ENCODE measurements at regions of chr18 and their contacts with region 1.

Region 1: GRCh38 chr18:57523171-57523956 is 63.1 kb downstream of the FECH start:
- DNase-seq: no peak
- H3K4me3 ChIP-seq: no peak overlapping the region
- H3K27ac ChIP-seq: no peak overlapping the region
- H3K4me1 ChIP-seq: no peaks in the 10 kb centered on the region
- H3K27me3 ChIP-seq: no peaks in the 10 kb centered on the region
- CTCF ChIP-seq: no peak

Region 2: GRCh38 chr18:57446322-57446721 is 77.0 kb before region 1 on chr18:
- CTCF ChIA-PET with region 1: no interaction called
- dilution Hi-C with region 1: no loop called
- in situ Hi-C with region 1: no loop called
- intact Hi-C with region 1: no loop called
- DNase-seq: no peak
- H3K4me3 ChIP-seq: no peak overlapping the region
- H3K27ac ChIP-seq: no peak overlapping the region
- H3K4me1 ChIP-seq: no peaks in the 10 kb centered on the region
- H3K27me3 ChIP-seq: peaks cover 13% of the 10 kb centered on the region
- CTCF ChIP-seq: peak; percentile 35 to 69

Region 3: GRCh38 chr18:57466745-57467409 is 56.5 kb before region 1 on chr18:
- CTCF ChIA-PET with region 1: no interaction called
- dilution Hi-C with region 1: loop called (anchors 5 kb)
- in situ Hi-C with region 1: no loop called
- intact Hi-C with region 1: no loop called
- DNase-seq: no peak
- H3K4me3 ChIP-seq: no peak overlapping the region
- H3K27ac ChIP-seq: no peak overlapping the region
- H3K4me1 ChIP-seq: no peaks in the 10 kb centered on the region
- H3K27me3 ChIP-seq: no peaks in the 10 kb centered on the region
- CTCF ChIP-seq: no peak

Region 4: GRCh38 chr18:57555134-57555533 is 31.8 kb after region 1 on chr18:
- CTCF ChIA-PET with region 1: no interaction called
- dilution Hi-C with region 1: no loop called
- in situ Hi-C with region 1: no loop called
- intact Hi-C with region 1: no loop called
- DNase-seq: no peak
- H3K4me3 ChIP-seq: no peak overlapping the region
- H3K27ac ChIP-seq: no peak overlapping the region
- H3K4me1 ChIP-seq: no peaks in the 10 kb centered on the region
- H3K27me3 ChIP-seq: no peaks in the 10 kb centered on the region
- CTCF ChIP-seq: no peak